ENCODE measurements at regions of chr2 and their contacts with region 1.

Region 1: DNA sequence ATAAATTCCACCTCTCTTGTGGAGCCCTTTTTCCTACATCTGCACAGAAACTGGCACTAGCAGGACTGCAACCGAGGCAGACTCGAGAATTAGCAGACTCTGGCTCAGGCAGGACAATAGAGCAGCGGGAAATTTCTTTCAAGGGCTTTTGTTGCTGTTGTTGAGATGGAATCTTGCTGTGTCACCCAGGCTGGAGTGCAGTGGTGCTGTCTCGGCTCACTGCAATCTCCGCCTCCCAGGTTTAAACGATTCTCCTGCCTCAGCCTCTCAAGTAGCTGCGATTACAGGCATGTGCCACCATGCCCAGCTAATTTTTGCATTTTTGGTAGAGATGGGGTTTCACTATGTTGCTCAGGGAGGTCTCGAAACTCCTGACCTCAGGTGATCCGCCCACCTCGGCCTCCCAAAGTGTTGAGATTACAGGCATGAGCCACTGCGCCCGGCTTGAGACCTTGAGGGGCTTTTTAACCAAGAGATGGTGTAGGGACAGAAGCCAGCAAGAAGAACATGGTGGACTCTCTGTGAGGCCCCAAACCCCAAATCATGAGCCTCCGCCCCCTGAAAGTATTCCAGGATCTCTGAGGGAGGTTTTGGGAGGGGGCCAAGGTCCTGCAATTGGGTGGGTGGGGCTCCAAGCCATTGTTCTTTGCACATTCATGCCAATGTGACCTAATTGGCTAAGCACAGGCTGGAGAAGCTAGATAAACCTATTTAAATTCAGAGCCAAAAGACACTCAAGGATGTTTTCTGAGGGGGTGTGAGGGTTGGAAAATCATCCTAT is 68.4 kb upstream of the MSH2 start:
- DNase-seq: no peak
- H3K4me3 ChIP-seq: no peak overlapping the region
- CTCF ChIP-seq: no peak
- POLR2A ChIP-seq: no peak

Region 2: GRCh38 chr2:47389692-47390091 is 55.1 kb after region 1 on chr2:
- intact Hi-C with region 1: loop called (anchors 5 kb)
- DNase-seq: peak in 1 of 2 donors; percentile 58
- H3K4me3 ChIP-seq: no peak overlapping the region
- CTCF ChIP-seq: no peak
- POLR2A ChIP-seq: no peak

Measured in lower leg skin (tissue), 4 donors.